ENCODE measurements at regions of chr3 and their contacts with region 1.

Region 1: GRCh38 chr3:8501371-8502131 is at the start of gene LMCD1:
- DNase-seq: peak; percentile 88

Region 2: GRCh38 chr3:8490079-8490552 is 11.4 kb before region 1 on chr3:
- CTCF ChIA-PET with region 1: no interaction called
- POLR2A ChIA-PET with region 1: interaction called, 13 read pairs
- DNase-seq: no peak

Measured in HEK293T (cell line).